Tibial artery (tissue), 4 donors: ENCODE measurements at regions of chr22 and their contacts with region 1.

Region 1: GRCh38 chr22:38753948-38754750 is 1.6 kb downstream of the SUN2 start:
- DNase-seq: peak; percentile 92 to 98
- H3K4me3 ChIP-seq: peak overlapping the region; percentile 68 to 76
- H3K27ac ChIP-seq: peak overlapping the region; percentile 96 to 98
- H3K4me1 ChIP-seq: peaks cover 3 to 51% (median 36%) of the 10 kb centered on the region in 4 donors
- H3K27me3 ChIP-seq: no peaks in the 10 kb centered on the region
- CTCF ChIP-seq: no peak

Region 2: GRCh38 chr22:38403812-38404211 is 350.3 kb before region 1 on chr22:
- intact Hi-C with region 1: no loop called
- DNase-seq: peak in 1 of 2 donors; percentile 35
- H3K4me3 ChIP-seq: no peak overlapping the region
- H3K27ac ChIP-seq: no peak overlapping the region
- H3K4me1 ChIP-seq: peaks cover 0 to 8% (median 3%) of the 10 kb centered on the region in 4 donors
- H3K27me3 ChIP-seq: peaks cover 0 to 29% of the 10 kb centered on the region in 2 donors
- CTCF ChIP-seq: no peak

Region 3: GRCh38 chr22:38705235-38706100 is 48.7 kb before region 1 on chr22 and contains the start of gene GTPBP1:
- intact Hi-C with region 1: loop called (anchors 5 kb)
- DNase-seq: peak; percentile 100
- H3K4me3 ChIP-seq: peak within 1 kb of the TSS; percentile 85 to 97
- H3K27ac ChIP-seq: peak within 1 kb of the TSS; percentile 87 to 96
- H3K4me1 ChIP-seq: peaks cover 0 to 44% (median 22%) of the 10 kb centered on the region in 4 donors
- H3K27me3 ChIP-seq: no peaks in the 10 kb centered on the region
- CTCF ChIP-seq: peak in 1 of 2 experiments; percentile 21